ENCODE measurements at regions of chr1 and their contacts with region 1.

Region 1: GRCh38 chr1:156717275-156717805 is 10.9 kb upstream of the METTL25B start:
- DNase-seq: no peak
- ATAC-seq: no peak
- H3K4me3 Mint-ChIP-seq: no peak overlapping the region
- H3K27ac Mint-ChIP-seq: no peak overlapping the region
- H3K4me1 Mint-ChIP-seq: peaks cover 13% of the 10 kb centered on the region
- H3K27me3 Mint-ChIP-seq: no peaks in the 10 kb centered on the region
- CTCF ChIP-seq: no peak

Region 2: GRCh38 chr1:156705918-156706656 is 11.3 kb before region 1 on chr1:
- CTCF ChIA-PET with region 1: interaction called, 20 read pairs
- POLR2A ChIA-PET with region 1: interaction called, 4 read pairs
- intact Hi-C with region 1: no loop called
- DNase-seq: peak; percentile 87
- ATAC-seq: peak; percentile 67
- H3K4me3 Mint-ChIP-seq: peak overlapping the region; percentile 75
- H3K27ac Mint-ChIP-seq: peak overlapping the region; percentile 75
- H3K4me1 Mint-ChIP-seq: peaks cover 34% of the 10 kb centered on the region
- H3K27me3 Mint-ChIP-seq: peaks cover 19% of the 10 kb centered on the region
- CTCF ChIP-seq: peak; percentile 99

Measured in activated CD8-positive, alpha-beta T cell treated with anti-CD3 and anti-CD28 coated beads for 36 hours (primary cell).